Motor neuron (in vitro differentiated cells): ENCODE measurements at regions of chr4 and their contacts with region 1.

Region 1: GRCh38 chr4:112145326-112145819 is at the start of gene FAM241A:
- ATAC-seq: peak; percentile 94 to 97 (median 96)
- H3K4me3 ChIP-seq: peak within 1 kb of the TSS; percentile 48 to 91 (median 52)
- H3K27ac ChIP-seq: peak within 1 kb of the TSS in 1 of 2 donors; percentile 54
- H3K4me1 ChIP-seq: peaks cover 0 to 3% of the 10 kb centered on the region in 2 donors
- total RNA-seq, gene FAM241A: 0.46 to 2.3 (median 0.71) TPM

Region 2: GRCh38 chr4:111283061-111283677 is 862.2 kb before region 1 on chr4:
- in situ Hi-C with region 1: no loop called
- ATAC-seq: no peak
- H3K4me3 ChIP-seq: no peak overlapping the region
- H3K27ac ChIP-seq: no peak overlapping the region
- H3K4me1 ChIP-seq: peaks cover 0 to 4% of the 10 kb centered on the region in 2 donors

Region 3: DNA sequence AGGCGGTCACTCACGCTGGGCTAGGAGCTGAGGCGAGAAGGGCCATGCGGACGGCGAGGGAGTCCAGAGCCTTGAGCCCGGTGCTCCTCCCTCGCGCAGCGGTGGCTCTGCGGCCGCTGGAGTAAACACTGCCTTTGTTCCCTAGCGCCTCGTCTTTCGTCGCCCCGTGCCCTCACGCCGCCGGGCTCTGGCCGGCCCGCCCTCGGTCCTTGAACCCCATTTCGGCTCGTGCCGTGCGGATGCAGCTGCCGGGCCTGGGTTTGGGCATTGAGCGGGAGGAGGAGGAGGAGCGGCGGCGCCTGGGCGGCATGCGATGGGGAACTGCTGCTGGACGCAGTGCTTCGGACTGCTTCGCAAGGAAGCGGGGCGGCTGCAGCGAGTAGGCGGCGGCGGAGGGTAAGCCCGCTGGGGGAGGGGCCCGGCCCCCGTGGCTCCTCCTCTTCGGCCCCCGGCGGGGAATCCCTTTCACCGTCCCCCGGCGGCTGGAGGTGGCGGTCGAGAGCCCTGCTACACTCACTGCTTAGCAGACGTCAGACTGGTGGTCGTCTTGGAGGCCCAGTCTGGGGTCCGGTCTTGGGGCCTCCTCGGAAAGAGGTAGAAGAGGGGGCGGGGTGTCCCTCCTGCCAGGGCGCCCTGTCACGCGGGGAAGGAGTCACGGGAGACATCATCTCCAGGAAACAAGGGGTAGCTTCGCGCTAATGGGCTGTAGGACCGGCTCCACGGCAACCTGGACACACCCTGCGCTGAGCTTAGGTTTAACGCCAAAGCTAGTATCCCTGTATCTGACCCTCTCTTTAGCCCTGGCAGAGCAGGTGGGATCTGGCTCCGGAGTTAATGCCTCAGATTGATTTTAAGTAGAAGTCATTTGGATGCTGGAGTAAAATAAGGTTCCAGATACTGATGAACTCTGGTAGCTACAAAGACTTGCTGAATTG is 86.7 kb after region 1 on chr4 and contains the start of gene AP1AR:
- in situ Hi-C with region 1: loop called in 1 of 9 experiments (anchors 25 kb)
- ATAC-seq: peak; percentile 62 to 83 (median 80)
- H3K4me3 ChIP-seq: peak within 1 kb of the TSS; percentile 70 to 99 (median 86)
- H3K27ac ChIP-seq: peak within 1 kb of the TSS; percentile 89 to 93
- H3K4me1 ChIP-seq: peaks cover 8 to 17% of the 10 kb centered on the region in 2 donors
- total RNA-seq, gene AP1AR: 21.1 to 31.4 (median 23.8) TPM